ENCODE measurements at regions of chr1 and their contacts with region 1.

Region 1: GRCh38 chr1:7042322-7043190 is 257.3 kb downstream of the CAMTA1 start:
- DNase-seq: peak; percentile 24
- H3K4me3 ChIP-seq: no peak overlapping the region
- H3K27ac ChIP-seq: no peak overlapping the region
- H3K4me1 ChIP-seq: peaks cover 5% of the 10 kb centered on the region
- H3K27me3 ChIP-seq: no peaks in the 10 kb centered on the region
- CTCF ChIP-seq: peak; percentile 57 to 59

Region 2: GRCh38 chr1:6794164-6794563 is 248.4 kb before region 1 on chr1:
- CTCF ChIA-PET with region 1: no interaction called
- dilution Hi-C with region 1: no loop called
- in situ Hi-C with region 1: no loop called
- intact Hi-C with region 1: loop called (anchors 10 kb)
- DNase-seq: peak; percentile 8
- H3K4me3 ChIP-seq: no peak overlapping the region
- H3K27ac ChIP-seq: no peak overlapping the region
- H3K4me1 ChIP-seq: no peaks in the 10 kb centered on the region
- H3K27me3 ChIP-seq: no peaks in the 10 kb centered on the region
- CTCF ChIP-seq: peak; percentile 23 to 25

Region 3: GRCh38 chr1:6984986-6985385 is 57.6 kb before region 1 on chr1:
- CTCF ChIA-PET with region 1: no interaction called
- dilution Hi-C with region 1: no loop called
- in situ Hi-C with region 1: no loop called
- intact Hi-C with region 1: no loop called
- DNase-seq: no peak
- H3K4me3 ChIP-seq: no peak overlapping the region
- H3K27ac ChIP-seq: no peak overlapping the region
- H3K4me1 ChIP-seq: peaks cover 8% of the 10 kb centered on the region
- H3K27me3 ChIP-seq: no peaks in the 10 kb centered on the region
- CTCF ChIP-seq: no peak

Region 4: DNA sequence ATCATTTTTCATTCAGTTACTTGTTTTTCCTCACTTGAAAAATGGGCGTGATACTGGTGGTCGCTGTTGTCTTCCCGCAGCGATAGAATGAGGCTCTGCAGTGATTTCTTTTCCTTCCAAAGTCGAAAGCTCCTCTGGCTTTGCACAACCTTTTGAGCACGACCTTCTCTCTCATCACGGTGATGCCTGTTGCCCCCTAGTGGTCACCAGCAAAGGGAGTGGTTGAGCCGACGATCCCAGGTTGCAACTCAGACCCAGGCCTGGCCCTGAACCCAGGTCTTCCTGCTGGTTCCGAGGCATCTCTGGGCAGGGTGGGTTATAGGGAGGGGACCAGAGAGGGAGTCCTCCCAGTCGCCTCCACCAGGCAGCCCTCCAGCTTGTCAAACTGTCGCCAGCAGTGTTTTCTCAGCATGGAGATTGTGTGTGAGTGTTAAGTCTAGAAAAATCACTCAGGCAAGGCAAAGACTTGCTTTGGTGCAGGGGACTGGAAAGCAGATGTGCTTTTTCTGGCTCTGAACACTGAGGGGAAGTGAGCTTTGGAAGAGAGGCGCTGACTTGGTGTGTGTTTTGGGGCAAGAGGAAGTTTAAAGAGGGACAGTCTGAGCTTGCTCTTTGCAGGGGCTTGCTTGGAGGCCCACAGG is 28.0 kb after region 1 on chr1:
- CTCF ChIA-PET with region 1: interaction called, 3 read pairs
- dilution Hi-C with region 1: no loop called
- in situ Hi-C with region 1: no loop called
- intact Hi-C with region 1: loop called (anchors 1 kb)
- DNase-seq: peak; percentile 34
- H3K4me3 ChIP-seq: no peak overlapping the region
- H3K27ac ChIP-seq: no peak overlapping the region
- H3K4me1 ChIP-seq: no peaks in the 10 kb centered on the region
- H3K27me3 ChIP-seq: peaks cover 4% of the 10 kb centered on the region
- CTCF ChIP-seq: peak; percentile 83 to 91

Region 5: DNA sequence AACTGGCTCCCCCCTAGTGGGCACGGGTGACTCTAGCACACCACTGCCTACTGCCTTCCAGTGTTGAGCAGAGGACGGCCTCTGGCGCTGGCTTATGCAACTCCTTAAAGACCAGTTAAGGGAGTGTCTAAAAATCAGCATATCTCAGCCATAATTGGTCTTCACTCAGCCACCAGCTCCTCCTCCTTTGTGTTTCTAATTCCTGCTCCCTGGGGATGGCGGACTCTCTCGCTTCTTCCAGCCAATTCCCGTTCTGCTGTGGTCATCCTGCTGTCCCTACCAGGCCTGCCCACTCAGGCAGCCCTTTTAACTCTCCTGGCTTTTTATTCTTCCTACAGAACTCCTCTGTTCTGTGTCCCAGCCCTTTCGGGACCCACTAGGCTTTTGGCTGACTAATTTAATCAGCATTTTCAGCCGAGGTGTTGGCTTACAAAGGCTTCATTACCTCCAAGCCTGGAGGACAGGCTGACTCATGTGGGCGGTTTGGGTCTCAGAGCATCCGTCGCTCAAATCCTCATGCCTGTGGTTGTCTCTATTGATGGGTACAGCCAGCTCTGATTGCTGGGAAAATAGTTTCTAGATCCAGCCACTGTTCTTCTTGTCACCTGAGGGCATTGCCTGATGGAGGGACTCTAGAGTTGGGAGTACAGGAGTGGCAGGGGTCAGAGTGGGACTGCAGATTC is 75.2 kb after region 1 on chr1:
- CTCF ChIA-PET with region 1: interaction called, 9 read pairs
- dilution Hi-C with region 1: no loop called
- in situ Hi-C with region 1: no loop called
- intact Hi-C with region 1: loop called (anchors 2 kb)
- DNase-seq: peak; percentile 87
- H3K4me3 ChIP-seq: peak overlapping the region; percentile 19 to 47 (median 32)
- H3K27ac ChIP-seq: peak overlapping the region; percentile 93
- H3K4me1 ChIP-seq: peaks cover 30% of the 10 kb centered on the region
- H3K27me3 ChIP-seq: no peaks in the 10 kb centered on the region
- CTCF ChIP-seq: peak; percentile 52 to 56

Region 6: GRCh38 chr1:7207875-7208646 is 165.5 kb after region 1 on chr1:
- CTCF ChIA-PET with region 1: interaction called, 18 read pairs
- dilution Hi-C with region 1: loop called (anchors 10 kb)
- in situ Hi-C with region 1: loop called (anchors 5 to 10 kb)
- intact Hi-C with region 1: loop called (anchors 1 kb)
- DNase-seq: peak; percentile 64
- H3K4me3 ChIP-seq: no peak overlapping the region
- H3K27ac ChIP-seq: no peak overlapping the region
- H3K4me1 ChIP-seq: no peaks in the 10 kb centered on the region
- H3K27me3 ChIP-seq: no peaks in the 10 kb centered on the region
- CTCF ChIP-seq: peak; percentile 99

Region 7: DNA sequence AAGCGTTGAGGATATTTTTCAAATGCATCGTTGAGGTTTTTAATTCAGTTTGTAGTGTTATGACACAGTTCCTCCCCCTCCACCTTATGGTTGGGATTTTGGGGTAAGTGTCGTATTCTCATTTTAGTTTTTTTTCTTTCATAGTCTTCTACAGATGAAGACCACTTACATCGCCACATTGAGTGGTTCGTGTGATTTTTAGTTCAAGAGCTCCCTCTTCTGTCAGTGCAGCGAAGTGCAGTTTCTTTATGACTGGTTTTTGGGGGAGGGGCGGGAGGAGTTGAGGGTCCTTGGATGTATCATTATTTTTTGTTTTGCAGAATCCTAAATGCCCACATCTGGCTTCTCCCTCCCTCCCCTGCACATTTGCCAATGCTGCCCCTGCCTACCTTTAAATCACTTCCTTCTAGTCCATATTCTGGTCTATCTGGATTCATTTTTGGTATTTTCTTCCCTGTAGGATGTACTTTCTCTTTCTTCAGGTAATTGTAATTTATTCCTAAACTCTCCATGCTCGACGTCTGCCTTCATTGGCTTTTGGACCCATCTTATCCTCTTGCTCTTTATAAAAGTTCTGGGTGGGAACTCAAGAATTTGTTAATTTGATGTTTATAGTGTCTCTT is 175.8 kb after region 1 on chr1:
- CTCF ChIA-PET with region 1: interaction called, 4 read pairs
- dilution Hi-C with region 1: loop called (anchors 10 kb)
- in situ Hi-C with region 1: loop called in 1 of 2 experiments (anchors 10 kb)
- intact Hi-C with region 1: no loop called
- DNase-seq: peak; percentile 14
- H3K4me3 ChIP-seq: no peak overlapping the region
- H3K27ac ChIP-seq: no peak overlapping the region
- H3K4me1 ChIP-seq: no peaks in the 10 kb centered on the region
- H3K27me3 ChIP-seq: no peaks in the 10 kb centered on the region
- CTCF ChIP-seq: peak; percentile 78 to 83

Region 8: GRCh38 chr1:7539769-7540175 is 497.2 kb after region 1 on chr1:
- CTCF ChIA-PET with region 1: no interaction called
- dilution Hi-C with region 1: no loop called
- in situ Hi-C with region 1: no loop called
- intact Hi-C with region 1: loop called (anchors 2 kb)
- DNase-seq: peak; percentile 81
- H3K4me3 ChIP-seq: no peak overlapping the region
- H3K27ac ChIP-seq: no peak overlapping the region
- H3K4me1 ChIP-seq: no peaks in the 10 kb centered on the region
- H3K27me3 ChIP-seq: peaks cover 2% of the 10 kb centered on the region
- CTCF ChIP-seq: peak; percentile 77 to 94